HepG2 (cell line): ENCODE measurements at regions of chr14 and their contacts with region 1.

Region 1: GRCh38 chr14:90399541-90400444 is 3.0 kb downstream of the CALM1 start:
- DNase-seq: peak; percentile 83
- ATAC-seq: peak; percentile 68
- H3K4me3 ChIP-seq: peak overlapping the region in 2 of 3 experiments; percentile 20 to 71; a peak in 2 of 6 replicates
- H3K27ac ChIP-seq: no peak overlapping the region
- H3K4me1 ChIP-seq: peaks cover 39% of the 10 kb centered on the region
- H3K27me3 ChIP-seq: peaks cover 0 to 4% of the 10 kb centered on the region in 2 experiments; a peak in 1 of 5 replicates
- CTCF ChIP-seq: peak; percentile 98
- EP300 ChIP-seq: no peak
- POLR2A ChIP-seq: no peak
- RAD21 ChIP-seq: peak; percentile 91

Region 2: GRCh38 chr14:90301668-90302090 is 98.1 kb before region 1 on chr14:
- CTCF ChIA-PET with region 1: interaction called, 3 read pairs
- POLR2A ChIA-PET with region 1: no interaction called
- in situ Hi-C with region 1: no loop called
- intact Hi-C with region 1: loop called (anchors 1 kb)
- DNase-seq: peak; percentile 30
- ATAC-seq: peak; percentile 42; the same call in 2 of the 3 replicates
- H3K4me3 ChIP-seq: no peak overlapping the region
- H3K27ac ChIP-seq: no peak overlapping the region
- H3K4me1 ChIP-seq: peaks cover 48% of the 10 kb centered on the region
- H3K27me3 ChIP-seq: no peaks in the 10 kb centered on the region
- CTCF ChIP-seq: peak; percentile 66
- EP300 ChIP-seq: no peak
- POLR2A ChIP-seq: no peak
- RAD21 ChIP-seq: peak; percentile 57

Region 3: GRCh38 chr14:90416720-90417119 is 16.9 kb after region 1 on chr14:
- CTCF ChIA-PET with region 1: no interaction called
- POLR2A ChIA-PET with region 1: no interaction called
- in situ Hi-C with region 1: no loop called
- intact Hi-C with region 1: no loop called
- DNase-seq: no peak
- ATAC-seq: no peak
- H3K4me3 ChIP-seq: no peak overlapping the region
- H3K27ac ChIP-seq: no peak overlapping the region
- H3K4me1 ChIP-seq: peaks cover 10% of the 10 kb centered on the region
- H3K27me3 ChIP-seq: no peaks in the 10 kb centered on the region
- CTCF ChIP-seq: no peak
- EP300 ChIP-seq: no peak
- POLR2A ChIP-seq: no peak
- RAD21 ChIP-seq: no peak

Region 4: DNA sequence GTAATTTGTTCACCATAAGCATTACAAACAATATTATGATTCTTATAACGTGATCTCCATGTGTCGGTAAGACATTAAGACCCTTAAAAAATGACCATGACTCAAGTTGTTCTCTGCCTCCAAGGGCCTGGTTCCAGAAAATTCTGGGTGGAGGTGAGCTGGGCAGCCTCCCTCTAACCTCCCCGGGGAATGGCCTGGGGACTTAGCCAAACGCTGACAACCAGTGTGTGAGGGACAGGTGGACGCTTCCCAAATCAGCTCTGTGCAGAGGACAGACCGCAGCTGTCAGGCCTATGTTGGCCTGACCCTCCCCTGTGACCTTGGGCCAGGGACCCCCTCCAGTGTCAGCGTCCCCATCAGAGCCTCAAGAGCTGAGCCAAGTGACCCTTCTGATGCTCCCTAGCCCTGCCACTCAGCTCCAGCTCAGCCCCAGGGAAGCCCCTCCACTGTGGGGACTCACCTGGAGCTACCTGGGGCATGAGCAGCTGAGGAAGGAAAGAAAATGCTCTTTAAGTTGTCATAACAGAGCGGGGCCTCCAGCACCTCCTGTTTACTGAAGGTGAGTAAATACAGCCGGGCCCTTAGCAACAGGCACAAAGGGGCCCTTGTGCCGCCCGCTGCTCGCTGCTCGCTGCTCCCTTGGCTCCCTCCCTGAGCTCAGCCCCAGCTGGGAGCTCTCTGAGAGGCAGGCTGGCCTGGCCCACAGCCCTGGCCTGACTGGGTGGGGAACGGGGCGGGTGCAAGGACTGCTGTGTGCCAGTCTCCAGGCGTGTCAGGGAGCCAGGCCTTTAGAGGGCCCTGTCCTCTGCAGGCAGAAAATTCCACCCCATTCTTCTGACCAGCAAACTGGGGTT is 113.6 kb after region 1 on chr14:
- CTCF ChIA-PET with region 1: interaction called, 54 read pairs
- POLR2A ChIA-PET with region 1: interaction called, 17 read pairs
- in situ Hi-C with region 1: no loop called
- intact Hi-C with region 1: no loop called
- DNase-seq: peak; percentile 93
- ATAC-seq: peak; percentile 96
- H3K4me3 ChIP-seq: peak overlapping the region; percentile 14 to 56 (median 20); a peak in 5 of 6 replicates
- H3K27ac ChIP-seq: peak overlapping the region; percentile 83
- H3K4me1 ChIP-seq: peaks cover 85% of the 10 kb centered on the region
- H3K27me3 ChIP-seq: no peaks in the 10 kb centered on the region
- CTCF ChIP-seq: peak; percentile 6; the same call in 1 of the 2 replicates
- EP300 ChIP-seq: peak; percentile 85 to 88
- POLR2A ChIP-seq: peak in 1 of 2 experiments; percentile 2; a peak in 2 of 4 replicates
- RAD21 ChIP-seq: peak; percentile 52; the same call in 1 of the 2 replicates

Region 5: DNA sequence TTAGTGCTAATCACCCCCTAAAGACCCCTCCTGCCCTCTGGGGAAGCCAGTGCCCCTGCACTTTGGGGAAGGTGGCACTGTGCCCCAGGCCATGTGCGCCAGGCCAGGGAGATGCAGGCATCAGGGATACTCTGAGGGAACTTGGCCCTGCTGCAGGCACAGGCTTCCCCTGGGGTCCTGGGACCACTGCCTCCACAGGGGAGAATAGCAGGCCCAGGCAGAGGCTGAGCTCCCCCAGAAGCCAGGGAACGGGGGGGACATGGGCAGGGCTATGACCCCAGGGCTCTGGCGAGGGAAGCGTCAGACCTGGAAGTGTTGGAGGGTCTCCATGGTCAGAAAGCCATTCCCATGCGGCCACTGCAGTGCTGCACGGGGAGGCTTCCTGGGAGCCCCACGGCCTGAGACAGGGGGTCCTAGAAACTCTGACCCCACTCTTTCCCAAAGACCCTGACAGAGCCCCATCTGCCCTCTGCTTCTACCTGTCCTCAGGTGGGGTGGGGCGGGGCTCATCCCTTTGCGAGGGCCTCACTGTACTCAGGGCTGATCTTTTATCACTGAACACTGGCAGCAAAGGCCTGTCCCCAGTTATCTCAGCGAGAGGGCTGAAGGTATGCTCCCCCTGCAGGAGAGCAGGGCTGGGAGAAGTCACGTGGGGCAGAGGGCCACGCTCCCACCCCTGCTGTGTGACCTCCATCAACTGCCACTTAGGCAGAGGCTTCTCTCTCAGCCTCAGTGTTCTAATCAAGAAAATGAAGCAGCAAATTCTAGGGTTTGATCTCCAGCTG is 157.1 kb after region 1 on chr14:
- CTCF ChIA-PET with region 1: no interaction called
- POLR2A ChIA-PET with region 1: no interaction called
- in situ Hi-C with region 1: no loop called
- intact Hi-C with region 1: loop called (anchors 1 kb)
- DNase-seq: peak; percentile 14
- ATAC-seq: peak; percentile 65
- H3K4me3 ChIP-seq: peak overlapping the region in 1 of 3 experiments; percentile 67; a peak in 1 of 6 replicates
- H3K27ac ChIP-seq: no peak overlapping the region
- H3K4me1 ChIP-seq: peaks cover 20% of the 10 kb centered on the region
- H3K27me3 ChIP-seq: peaks cover 0 to 10% of the 10 kb centered on the region in 2 experiments; a peak in 3 of 5 replicates
- CTCF ChIP-seq: peak; percentile 31
- EP300 ChIP-seq: no peak
- POLR2A ChIP-seq: no peak
- RAD21 ChIP-seq: no peak

Region 6: GRCh38 chr14:90758028-90758889 is 358.5 kb after region 1 on chr14:
- CTCF ChIA-PET with region 1: interaction called, 11 read pairs
- POLR2A ChIA-PET with region 1: no interaction called
- in situ Hi-C with region 1: no loop called
- intact Hi-C with region 1: loop called (anchors 5 kb)
- DNase-seq: peak; percentile 79
- ATAC-seq: peak; percentile 95
- H3K4me3 ChIP-seq: peak overlapping the region; percentile 53 to 85 (median 63); a peak in 5 of 6 replicates
- H3K27ac ChIP-seq: peak overlapping the region; percentile 59
- H3K4me1 ChIP-seq: peaks cover 15% of the 10 kb centered on the region
- H3K27me3 ChIP-seq: no peaks in the 10 kb centered on the region
- CTCF ChIP-seq: peak; percentile 92
- EP300 ChIP-seq: no peak
- POLR2A ChIP-seq: peak; percentile 57 to 64
- RAD21 ChIP-seq: peak; percentile 78